ENCODE measurements at regions of chr1 and their contacts with region 1.

Region 1: DNA sequence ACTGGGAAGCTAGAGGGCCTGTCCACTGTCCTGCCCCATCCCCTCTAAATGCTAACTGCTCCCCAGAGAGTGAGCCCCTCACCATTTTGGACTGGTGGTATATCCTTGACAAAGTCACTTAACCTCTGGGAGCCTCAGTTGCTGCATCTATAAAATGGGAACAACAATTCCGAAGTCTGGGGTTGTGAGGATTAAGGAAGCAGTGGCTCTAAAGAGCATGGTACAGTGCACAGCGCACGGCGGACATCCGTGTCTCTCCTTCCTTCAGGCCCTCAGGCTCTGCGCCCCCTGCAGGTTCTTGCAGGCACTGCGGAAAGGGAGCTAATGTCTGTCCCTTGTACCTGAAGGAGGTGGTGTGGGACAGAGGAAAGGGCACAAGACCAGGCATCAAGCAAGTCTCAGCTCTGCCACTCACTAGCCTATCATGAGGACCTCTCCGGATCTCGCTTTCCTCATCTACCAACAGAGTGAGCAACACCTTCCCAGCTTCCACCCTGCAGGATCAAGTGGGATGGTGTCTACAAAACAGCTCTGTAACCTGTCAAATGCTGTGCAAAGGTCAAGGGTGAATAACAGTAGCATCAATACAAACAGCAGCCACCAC is 20.1 kb downstream of the ECE1 start:
- DNase-seq: peak; percentile 63 to 99
- H3K4me3 ChIP-seq: no peak overlapping the region
- H3K27ac ChIP-seq: no peak overlapping the region
- H3K4me1 ChIP-seq: no peaks in the 10 kb centered on the region; a peak in 2 of 7 replicates
- H3K27me3 ChIP-seq: no peaks in the 10 kb centered on the region
- CTCF ChIP-seq: peak; percentile 99 to 100 (median 100)
- EP300 ChIP-seq: no peak
- POLR2A ChIP-seq: no peak
- RAD21 ChIP-seq: peak; percentile 79 to 84

Region 2: GRCh38 chr1:21022279-21023040 is 247.7 kb before region 1 on chr1:
- CTCF ChIA-PET with region 1: no interaction called
- POLR2A ChIA-PET with region 1: no interaction called
- DNase-seq: no peak
- H3K4me3 ChIP-seq: no peak overlapping the region
- H3K27ac ChIP-seq: no peak overlapping the region; the same call in 1 of the 2 replicates
- H3K4me1 ChIP-seq: no peaks in the 10 kb centered on the region
- H3K27me3 ChIP-seq: no peaks in the 10 kb centered on the region
- CTCF ChIP-seq: no peak
- EP300 ChIP-seq: no peak
- POLR2A ChIP-seq: no peak
- RAD21 ChIP-seq: no peak

Region 3: GRCh38 chr1:21244986-21245687 is 25.1 kb before region 1 on chr1:
- CTCF ChIA-PET with region 1: interaction called, 48 read pairs
- POLR2A ChIA-PET with region 1: no interaction called
- DNase-seq: peak in 1 of 2 experiments; percentile 82
- H3K4me3 ChIP-seq: no peak overlapping the region
- H3K27ac ChIP-seq: no peak overlapping the region
- H3K4me1 ChIP-seq: peaks cover 0 to 2% (median 0%) of the 10 kb centered on the region in 4 experiments; a peak in 3 of 7 replicates
- H3K27me3 ChIP-seq: no peaks in the 10 kb centered on the region
- CTCF ChIP-seq: peak; percentile 84 to 88 (median 87)
- EP300 ChIP-seq: no peak
- POLR2A ChIP-seq: no peak
- RAD21 ChIP-seq: peak; percentile 46 to 55

Region 4: GRCh38 chr1:21302747-21303715 is 32.8 kb after region 1 on chr1:
- CTCF ChIA-PET with region 1: interaction called, 73 read pairs
- POLR2A ChIA-PET with region 1: interaction called, 3 read pairs
- DNase-seq: no peak
- H3K4me3 ChIP-seq: no peak overlapping the region
- H3K27ac ChIP-seq: no peak overlapping the region
- H3K4me1 ChIP-seq: peaks cover 4 to 19% (median 10%) of the 10 kb centered on the region in 4 experiments
- H3K27me3 ChIP-seq: no peaks in the 10 kb centered on the region
- CTCF ChIP-seq: no peak
- EP300 ChIP-seq: no peak
- POLR2A ChIP-seq: no peak
- RAD21 ChIP-seq: peak; percentile 16 to 29; a peak in 2 of 4 replicates

Region 5: DNA sequence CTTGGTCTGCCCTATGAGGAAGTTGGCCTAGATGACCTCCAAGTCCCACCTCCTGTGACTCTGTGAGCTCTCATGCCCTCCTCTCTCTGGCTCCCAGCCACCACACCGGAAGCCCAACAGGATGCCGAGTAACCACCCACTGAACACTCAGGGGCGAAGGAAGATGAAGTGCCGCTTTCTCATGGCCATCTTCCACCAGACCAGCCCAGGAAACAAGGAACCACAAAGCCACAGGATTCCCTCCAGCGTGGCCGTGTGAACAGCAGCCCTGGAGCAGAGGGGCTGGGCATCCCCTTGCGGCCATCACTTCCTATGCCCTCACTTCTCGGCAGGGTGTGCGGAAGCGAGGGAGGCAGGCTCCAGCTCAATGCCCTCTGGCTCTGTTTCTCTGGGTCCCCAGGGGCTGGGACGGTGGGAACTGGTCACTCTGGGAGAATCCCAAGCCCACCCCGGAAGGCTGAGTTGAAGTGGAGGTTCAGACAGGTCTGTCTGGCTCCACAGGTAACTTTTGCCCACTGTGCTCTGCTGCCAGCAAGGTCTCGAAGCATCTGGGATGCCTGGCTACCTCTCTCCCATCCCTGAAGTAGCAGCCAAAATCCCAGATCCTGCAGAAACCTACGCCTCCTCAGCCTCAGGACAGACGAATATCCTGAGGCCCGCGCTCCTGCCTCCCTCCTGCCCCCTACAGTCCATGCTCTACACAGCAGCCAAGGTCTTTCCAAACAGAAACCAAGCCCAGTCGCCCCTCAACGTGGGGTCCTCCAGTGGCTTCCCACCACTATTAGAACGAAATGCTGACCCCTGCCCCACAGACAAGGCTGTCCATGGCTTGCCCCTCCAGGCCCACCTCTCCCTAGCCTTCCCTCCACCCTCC is 64.3 kb after region 1 on chr1:
- CTCF ChIA-PET with region 1: interaction called, 167 read pairs
- POLR2A ChIA-PET with region 1: interaction called, 3 read pairs
- DNase-seq: peak in 1 of 2 experiments; percentile 89
- H3K4me3 ChIP-seq: peak overlapping the region in 3 of 4 experiments; percentile 19 to 45 (median 29); a peak in 6 of 8 replicates
- H3K27ac ChIP-seq: no peak overlapping the region
- H3K4me1 ChIP-seq: peaks cover 10 to 31% (median 20%) of the 10 kb centered on the region in 4 experiments
- H3K27me3 ChIP-seq: no peaks in the 10 kb centered on the region; a peak in 1 of 7 replicates
- CTCF ChIP-seq: peak; percentile 90 to 96 (median 93)
- EP300 ChIP-seq: no peak
- POLR2A ChIP-seq: no peak
- RAD21 ChIP-seq: peak; percentile 75 to 86

Region 6: DNA sequence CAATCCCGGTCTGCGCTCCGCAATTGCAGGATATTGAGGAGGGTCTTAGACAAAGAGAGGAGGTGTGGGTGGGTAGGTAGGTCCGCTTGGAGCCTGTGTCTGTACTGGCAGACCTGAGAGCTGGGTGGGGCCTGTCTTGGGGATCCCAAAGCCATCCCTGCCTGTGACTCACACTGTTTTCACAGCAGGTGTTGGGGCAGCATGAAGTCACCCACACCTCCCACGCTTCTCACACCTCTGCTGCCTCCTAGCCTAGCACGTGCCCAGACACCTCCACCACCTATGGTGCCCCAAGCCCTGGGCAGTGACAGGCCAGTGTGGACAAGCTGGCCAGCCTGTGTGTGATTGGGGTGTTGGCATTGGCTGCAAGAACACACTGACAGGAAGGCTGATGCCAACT is 85.8 kb after region 1 on chr1:
- CTCF ChIA-PET with region 1: interaction called, 64 read pairs
- POLR2A ChIA-PET with region 1: no interaction called
- DNase-seq: no peak
- H3K4me3 ChIP-seq: no peak overlapping the region
- H3K27ac ChIP-seq: no peak overlapping the region
- H3K4me1 ChIP-seq: peaks cover 0 to 2% (median 0%) of the 10 kb centered on the region in 4 experiments; a peak in 1 of 7 replicates
- H3K27me3 ChIP-seq: no peaks in the 10 kb centered on the region
- CTCF ChIP-seq: no peak
- EP300 ChIP-seq: no peak
- POLR2A ChIP-seq: no peak
- RAD21 ChIP-seq: no peak

Region 7: DNA sequence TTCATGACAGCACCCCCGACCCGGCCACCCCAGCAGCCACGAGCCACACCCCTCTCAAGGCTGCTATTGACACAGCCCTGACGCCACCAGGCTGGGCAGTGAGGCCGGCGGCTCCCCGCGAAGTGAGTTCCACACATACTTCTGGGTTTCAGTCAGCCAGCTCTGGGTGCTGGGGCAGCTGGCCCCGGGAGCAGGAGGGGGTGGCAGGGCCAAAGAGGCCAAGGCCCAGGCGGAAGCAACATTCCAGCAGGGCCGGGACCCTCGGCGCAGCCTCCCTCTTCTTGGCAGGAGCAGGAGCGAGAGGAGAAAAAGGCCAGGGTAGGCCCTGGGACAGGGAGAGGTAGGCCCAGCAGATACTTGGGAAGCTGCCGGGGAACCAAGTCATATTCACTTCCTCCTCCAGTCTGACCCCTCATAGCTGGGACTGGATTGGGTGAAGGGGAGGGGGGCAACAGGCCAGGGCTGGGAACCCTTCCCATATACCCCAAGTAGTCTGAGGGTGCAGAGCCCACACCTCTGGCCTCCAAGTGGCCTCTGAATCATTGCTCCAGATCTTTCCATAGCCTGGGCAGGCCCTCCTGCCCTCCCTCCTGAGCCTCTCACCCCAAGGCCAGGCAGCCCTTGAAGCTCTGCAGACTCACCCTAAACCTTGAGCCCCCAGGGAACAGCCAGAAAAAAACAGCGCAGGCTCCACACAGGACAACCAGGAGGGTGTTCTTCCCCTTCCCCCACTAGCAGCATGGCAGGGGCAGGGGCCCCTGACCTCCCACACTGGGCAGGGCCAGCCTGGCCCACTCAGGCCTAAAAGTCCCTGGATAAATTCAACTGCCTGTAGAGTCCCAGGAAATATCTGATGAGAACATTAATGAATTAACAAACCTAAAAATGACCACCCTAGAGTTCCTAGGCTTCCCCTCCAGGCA is 661.2 kb after region 1 on chr1:
- CTCF ChIA-PET with region 1: no interaction called
- POLR2A ChIA-PET with region 1: no interaction called
- DNase-seq: no peak
- H3K4me3 ChIP-seq: no peak overlapping the region
- H3K27ac ChIP-seq: no peak overlapping the region; the same call in 1 of the 2 replicates
- H3K4me1 ChIP-seq: peaks cover 8 to 45% (median 25%) of the 10 kb centered on the region in 4 experiments
- H3K27me3 ChIP-seq: no peaks in the 10 kb centered on the region
- CTCF ChIP-seq: no peak
- EP300 ChIP-seq: no peak
- POLR2A ChIP-seq: no peak
- RAD21 ChIP-seq: no peak